ENCODE measurements at regions of chr15 and their contacts with region 1.

Region 1: GRCh38 chr15:75389791-75390382 is 21.5 kb upstream of the MAN2C1 start:
- DNase-seq: peak; percentile 33 to 80
- H3K4me3 ChIP-seq: no peak overlapping the region
- H3K27ac ChIP-seq: peak overlapping the region; percentile 85
- H3K4me1 ChIP-seq: peaks cover 24% of the 10 kb centered on the region
- H3K27me3 ChIP-seq: no peaks in the 10 kb centered on the region
- CTCF ChIP-seq: no peak

Region 2: GRCh38 chr15:74889883-74890664 is 499.8 kb before region 1 on chr15 and contains the start of gene MPI:
- CTCF ChIA-PET with region 1: no interaction called
- POLR2A ChIA-PET with region 1: no interaction called
- intact Hi-C with region 1: no loop called
- DNase-seq: peak; percentile 63 to 77
- H3K4me3 ChIP-seq: peak within 1 kb of the TSS; percentile 70
- H3K27ac ChIP-seq: no peak within 1 kb of the TSS
- H3K4me1 ChIP-seq: peaks cover 33% of the 10 kb centered on the region
- H3K27me3 ChIP-seq: no peaks in the 10 kb centered on the region
- CTCF ChIP-seq: no peak
- total RNA-seq, gene MPI: 22.5 and 23.0 TPM in 2 replicates

Region 3: GRCh38 chr15:75436861-75437260 is 47.0 kb after region 1 on chr15:
- CTCF ChIA-PET with region 1: no interaction called
- POLR2A ChIA-PET with region 1: no interaction called
- intact Hi-C with region 1: loop called (anchors 10 kb)
- DNase-seq: no peak
- H3K4me3 ChIP-seq: no peak overlapping the region
- H3K27ac ChIP-seq: no peak overlapping the region
- H3K4me1 ChIP-seq: no peaks in the 10 kb centered on the region
- H3K27me3 ChIP-seq: no peaks in the 10 kb centered on the region
- CTCF ChIP-seq: no peak